ENCODE measurements at regions of chr18 and their contacts with region 1.

Region 1: GRCh38 chr18:22465859-22466457 is 48.2 kb upstream of the CTAGE1 start:
- DNase-seq: peak; percentile 61

Region 2: GRCh38 chr18:22169007-22169864 is 296.7 kb before region 1 on chr18 and contains the start of gene GATA6:
- CTCF ChIA-PET with region 1: no interaction called
- POLR2A ChIA-PET with region 1: interaction called, 13 read pairs
- DNase-seq: peak; percentile 90

Region 3: DNA sequence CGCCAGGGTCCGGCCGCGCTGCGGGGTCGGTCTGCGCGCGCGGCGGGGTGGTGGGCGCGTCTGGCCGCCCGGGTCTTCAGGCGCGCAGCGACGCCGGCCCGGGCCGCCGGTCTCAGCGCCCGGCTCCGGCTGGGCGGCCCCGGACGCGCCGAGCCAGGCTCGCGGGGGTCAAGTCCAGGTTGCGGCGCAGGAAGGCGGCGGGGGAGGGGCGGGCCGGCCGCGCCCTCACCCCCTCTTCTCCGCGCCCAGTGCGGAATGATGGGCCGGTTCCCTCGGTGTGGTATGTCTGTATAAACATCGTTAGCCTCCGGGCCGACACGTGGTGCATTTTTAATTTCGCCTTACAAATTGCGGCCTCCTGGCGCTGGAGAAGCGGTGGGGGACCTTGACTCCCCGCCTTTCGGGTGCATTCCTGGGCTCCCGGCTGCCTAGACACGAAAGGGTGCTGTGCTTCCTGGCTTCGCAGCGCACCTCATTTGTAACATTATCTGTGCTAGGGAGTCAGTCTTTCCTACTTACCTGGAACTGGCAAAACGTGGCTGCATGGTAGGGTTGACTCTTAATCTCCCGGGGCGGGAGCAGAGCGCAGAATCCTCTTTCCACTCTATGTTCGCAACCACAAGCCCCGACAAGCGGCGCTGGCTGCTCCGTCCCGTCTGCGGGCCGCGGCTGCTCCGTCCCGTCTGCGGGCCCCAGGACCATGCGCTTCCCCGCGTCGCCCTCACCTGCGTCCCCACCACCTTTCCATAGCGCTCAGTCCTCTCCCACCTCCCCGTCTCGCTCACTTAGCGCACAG is 117.2 kb before region 1 on chr18:
- CTCF ChIA-PET with region 1: no interaction called
- POLR2A ChIA-PET with region 1: interaction called, 11 read pairs
- DNase-seq: peak; percentile 57

Region 4: DNA sequence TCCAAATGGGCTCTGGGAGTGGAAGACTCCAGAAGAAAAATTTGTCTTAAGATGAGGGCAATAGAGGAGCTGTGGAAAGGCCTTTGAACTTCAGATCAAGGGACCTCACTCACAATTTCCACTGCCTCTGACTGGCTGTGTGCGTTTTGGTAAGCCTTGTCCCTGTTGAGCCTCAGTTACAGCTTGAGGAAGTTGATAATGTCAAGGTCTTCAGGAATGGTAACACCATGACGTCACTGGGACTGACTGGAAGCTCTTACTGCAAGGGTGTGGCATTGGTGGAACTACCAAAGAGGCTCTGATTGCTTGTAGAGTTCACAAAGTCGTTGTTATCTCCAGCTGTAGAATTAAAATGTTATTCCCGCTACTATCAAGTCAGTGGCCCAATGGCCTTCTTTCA is 19.1 kb before region 1 on chr18:
- CTCF ChIA-PET with region 1: no interaction called
- POLR2A ChIA-PET with region 1: no interaction called
- DNase-seq: no peak

Measured in HEK293T (cell line).